Naive thymus-derived CD4-positive, alpha-beta T cell (primary cell): ENCODE measurements at regions of chr7 and their contacts with region 1.

Region 1: DNA sequence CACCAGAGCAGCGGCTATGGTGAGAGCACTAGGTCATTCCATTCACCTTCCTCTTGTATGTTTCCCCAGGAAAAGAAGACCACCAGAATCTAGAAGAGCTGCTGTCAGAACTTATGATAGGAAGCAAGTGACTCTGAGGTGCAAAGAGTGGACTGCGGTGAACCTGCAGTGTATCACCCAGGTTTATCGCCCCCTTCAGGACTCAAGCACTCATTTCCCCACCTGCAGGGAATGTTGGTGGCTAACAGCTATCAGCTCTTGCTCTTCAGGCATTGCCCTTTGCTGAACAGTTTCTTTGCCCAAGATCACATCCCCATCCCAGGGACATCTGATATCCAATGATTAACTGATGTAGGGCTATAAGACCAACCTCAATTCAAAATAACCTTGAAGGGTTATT is 66.3 kb upstream of the IL6 start:
- DNase-seq: no peak
- ATAC-seq: no peak
- H3K4me3 ChIP-seq: no peak overlapping the region
- H3K4me3 Mint-ChIP-seq: no peak overlapping the region
- H3K27ac ChIP-seq: no peak overlapping the region
- H3K27ac Mint-ChIP-seq: no peak overlapping the region
- H3K4me1 ChIP-seq: peaks cover 0 to 4% of the 10 kb centered on the region in 2 donors
- H3K4me1 Mint-ChIP-seq: peaks cover 7 to 29% (median 16%) of the 10 kb centered on the region in 7 donors
- H3K27me3 ChIP-seq: no peaks in the 10 kb centered on the region
- H3K27me3 Mint-ChIP-seq: peaks cover 0 to 39% (median 0%) of the 10 kb centered on the region in 5 donors

Region 2: GRCh38 chr7:22672846-22673652 is 12.3 kb after region 1 on chr7:
- CTCF ChIA-PET with region 1: interaction called, 4 read pairs
- POLR2A ChIA-PET with region 1: no interaction called
- intact Hi-C with region 1: loop called in 1 of 2 experiments (anchors 2 kb)
- DNase-seq: no peak
- ATAC-seq: no peak
- H3K4me3 ChIP-seq: no peak overlapping the region
- H3K4me3 Mint-ChIP-seq: peak overlapping the region in 7 of 10 donors; percentile 7 to 68 (median 37)
- H3K27ac ChIP-seq: no peak overlapping the region
- H3K27ac Mint-ChIP-seq: peak overlapping the region; percentile 14 to 88 (median 78)
- H3K4me1 ChIP-seq: peaks cover 18 to 54% of the 10 kb centered on the region in 2 donors
- H3K4me1 Mint-ChIP-seq: peaks cover 43 to 68% (median 65%) of the 10 kb centered on the region in 7 donors
- H3K27me3 ChIP-seq: no peaks in the 10 kb centered on the region
- H3K27me3 Mint-ChIP-seq: peaks cover 0 to 13% (median 0%) of the 10 kb centered on the region in 5 donors

Region 3: GRCh38 chr7:22697876-22698606 is 37.3 kb after region 1 on chr7:
- CTCF ChIA-PET with region 1: no interaction called
- POLR2A ChIA-PET with region 1: no interaction called
- intact Hi-C with region 1: loop called (anchors 5 kb)
- DNase-seq: peak in 4 of 9 donors; percentile 10 to 25 (median 16)
- ATAC-seq: peak; percentile 79
- H3K4me3 ChIP-seq: no peak overlapping the region
- H3K4me3 Mint-ChIP-seq: peak overlapping the region in 3 of 10 donors; percentile 0 to 69 (median 31)
- H3K27ac ChIP-seq: no peak overlapping the region
- H3K27ac Mint-ChIP-seq: peak overlapping the region in 2 of 9 donors; percentile 23 to 73
- H3K4me1 ChIP-seq: peaks cover 3 to 31% of the 10 kb centered on the region in 2 donors
- H3K4me1 Mint-ChIP-seq: peaks cover 32 to 77% (median 46%) of the 10 kb centered on the region in 7 donors
- H3K27me3 ChIP-seq: no peaks in the 10 kb centered on the region
- H3K27me3 Mint-ChIP-seq: peaks cover 0 to 19% (median 0%) of the 10 kb centered on the region in 5 donors

Region 4: DNA sequence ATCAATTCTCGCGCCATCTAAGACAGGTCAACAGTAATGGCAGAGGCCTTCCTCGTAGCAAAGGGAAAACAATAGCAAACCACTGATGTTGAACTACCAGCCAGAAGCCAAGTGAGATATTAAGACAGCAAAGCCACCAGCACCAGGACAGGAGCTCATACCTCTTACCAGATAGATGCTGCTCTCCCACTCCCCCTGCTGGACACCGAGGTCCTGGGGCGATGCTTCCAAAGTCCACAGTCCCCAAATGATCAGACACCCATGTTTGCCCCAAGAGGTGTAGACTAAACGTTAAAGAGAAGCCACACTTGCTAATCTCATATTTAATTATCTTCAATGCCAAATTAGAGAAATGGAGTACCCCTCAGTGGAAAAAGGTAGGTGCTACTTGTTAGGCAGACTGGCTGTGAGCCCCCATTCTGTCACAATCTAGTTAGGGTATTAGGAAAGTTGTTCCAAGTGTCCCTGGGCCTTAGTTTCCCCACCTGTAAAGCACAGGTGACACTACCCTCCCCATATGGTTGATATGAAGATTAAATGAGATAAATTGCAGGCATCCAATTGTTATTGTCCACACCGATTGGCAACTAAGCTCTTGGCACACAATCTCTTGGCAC is 122.0 kb after region 1 on chr7:
- CTCF ChIA-PET with region 1: no interaction called
- POLR2A ChIA-PET with region 1: no interaction called
- intact Hi-C with region 1: loop called in 1 of 2 experiments (anchors 1 kb)
- DNase-seq: peak; percentile 39 to 73 (median 59)
- ATAC-seq: peak; percentile 90
- H3K4me3 ChIP-seq: no peak overlapping the region
- H3K4me3 Mint-ChIP-seq: no peak overlapping the region
- H3K27ac ChIP-seq: no peak overlapping the region
- H3K27ac Mint-ChIP-seq: no peak overlapping the region
- H3K4me1 ChIP-seq: no peaks in the 10 kb centered on the region
- H3K4me1 Mint-ChIP-seq: no peaks in the 10 kb centered on the region
- H3K27me3 ChIP-seq: no peaks in the 10 kb centered on the region
- H3K27me3 Mint-ChIP-seq: peaks cover 0 to 23% (median 0%) of the 10 kb centered on the region in 5 donors